Naive thymus-derived CD4-positive, alpha-beta T cell (primary cell): ENCODE measurements at regions of chr22 and their contacts with region 1.

Region 1: DNA sequence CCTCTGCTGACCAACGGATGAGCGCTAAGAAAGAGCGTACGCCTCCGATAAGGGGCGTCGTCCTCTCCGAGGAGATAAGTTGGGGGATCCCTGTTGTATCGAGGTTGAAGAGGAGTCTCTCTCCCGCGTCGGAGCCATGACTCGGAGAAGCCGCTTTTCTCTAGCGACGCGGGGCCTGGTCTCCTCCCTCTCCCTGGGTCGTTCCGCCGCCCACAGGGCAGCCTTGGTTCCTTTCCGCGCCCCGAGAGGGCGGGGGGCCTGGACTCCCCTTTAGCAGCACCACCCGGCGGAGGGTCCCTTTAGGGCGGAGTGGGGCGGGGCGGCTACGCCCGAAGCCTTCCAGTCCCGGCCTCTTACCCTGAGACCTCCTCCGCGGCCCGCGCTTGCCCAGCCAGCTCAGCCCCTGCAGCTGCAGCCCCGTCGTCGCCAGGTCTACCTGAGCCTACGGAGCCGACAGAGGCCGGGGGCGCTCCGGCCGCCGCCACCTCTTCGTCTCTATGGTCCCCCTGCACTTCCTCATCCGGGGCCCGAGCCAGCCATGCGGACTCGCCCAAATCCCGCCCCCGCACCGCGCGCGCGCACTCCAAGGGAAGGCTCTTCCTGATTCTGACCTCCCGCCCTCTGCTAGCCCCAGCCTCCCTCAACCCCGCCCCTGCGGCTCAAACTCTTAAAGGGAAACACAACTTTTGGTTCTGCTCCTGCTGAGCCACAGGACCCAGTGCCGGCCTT is at the start of gene PRR14L:
- DNase-seq: peak; percentile 94 to 100 (median 98)
- ATAC-seq: peak; percentile 86
- H3K4me3 ChIP-seq: peak within 1 kb of the TSS; percentile 92
- H3K4me3 Mint-ChIP-seq: peak within 1 kb of the TSS; percentile 87 to 97 (median 94)
- H3K27ac ChIP-seq: peak within 1 kb of the TSS; percentile 83
- H3K27ac Mint-ChIP-seq: peak within 1 kb of the TSS; percentile 82 to 98 (median 96)
- H3K4me1 ChIP-seq: peaks cover 31 to 37% of the 10 kb centered on the region in 2 donors
- H3K4me1 Mint-ChIP-seq: peaks cover 36 to 65% (median 59%) of the 10 kb centered on the region in 7 donors
- H3K27me3 ChIP-seq: no peaks in the 10 kb centered on the region
- H3K27me3 Mint-ChIP-seq: peaks cover 0 to 2% (median 0%) of the 10 kb centered on the region in 5 donors
- total RNA-seq, gene PRR14L: 43.1 to 82.6 (median 66.9) TPM

Region 2: DNA sequence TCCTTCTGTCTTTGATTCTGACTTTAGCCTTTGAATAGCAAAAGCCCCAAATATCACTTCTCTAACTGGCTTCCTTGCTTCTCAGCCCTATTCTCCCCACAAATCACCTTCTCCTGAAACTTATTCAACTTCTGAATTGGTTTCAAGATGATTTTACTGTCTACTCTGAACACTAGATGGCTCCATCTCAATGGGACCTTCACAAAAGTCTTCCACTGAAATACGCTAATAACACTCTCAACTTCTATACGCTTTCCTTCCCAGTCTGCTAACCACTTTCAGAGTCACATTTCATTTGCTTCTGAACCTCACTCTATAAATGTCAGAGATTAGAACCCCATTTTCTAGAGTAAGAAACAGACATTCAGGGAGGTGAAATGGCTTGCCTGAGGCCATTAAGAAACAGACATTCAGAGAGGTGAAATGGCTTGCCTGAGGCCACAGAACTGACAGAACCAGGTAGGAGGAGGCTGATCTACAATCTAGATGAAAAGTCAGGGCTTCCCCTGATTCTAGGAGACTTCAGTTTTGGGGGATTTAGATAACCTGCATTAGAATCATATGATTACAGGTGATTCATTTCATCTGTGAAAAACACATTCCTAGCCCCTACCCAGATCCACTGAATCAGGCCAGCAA is 801.9 kb before region 1 on chr22:
- CTCF ChIA-PET with region 1: no interaction called
- POLR2A ChIA-PET with region 1: no interaction called
- intact Hi-C with region 1: loop called in 1 of 2 experiments (anchors 5 kb)
- DNase-seq: peak in 7 of 9 donors; percentile 29 to 67 (median 52)
- ATAC-seq: peak; percentile 72
- H3K4me3 ChIP-seq: no peak overlapping the region
- H3K4me3 Mint-ChIP-seq: no peak overlapping the region
- H3K27ac ChIP-seq: peak overlapping the region; percentile 4
- H3K27ac Mint-ChIP-seq: no peak overlapping the region
- H3K4me1 ChIP-seq: peaks cover 11 to 63% of the 10 kb centered on the region in 2 donors
- H3K4me1 Mint-ChIP-seq: peaks cover 52 to 72% (median 65%) of the 10 kb centered on the region in 7 donors
- H3K27me3 ChIP-seq: no peaks in the 10 kb centered on the region
- H3K27me3 Mint-ChIP-seq: no peaks in the 10 kb centered on the region

Region 3: GRCh38 chr22:31160328-31160978 is 589.3 kb before region 1 on chr22:
- CTCF ChIA-PET with region 1: no interaction called
- POLR2A ChIA-PET with region 1: no interaction called
- intact Hi-C with region 1: loop called in 1 of 2 experiments (anchors 5 kb)
- DNase-seq: peak in 3 of 9 donors; percentile 5 to 26 (median 9)
- ATAC-seq: peak; percentile 47
- H3K4me3 ChIP-seq: peak overlapping the region; percentile 76
- H3K4me3 Mint-ChIP-seq: peak overlapping the region; percentile 87 to 100 (median 99)
- H3K27ac ChIP-seq: peak overlapping the region; percentile 74
- H3K27ac Mint-ChIP-seq: peak overlapping the region; percentile 91 to 100 (median 97)
- H3K4me1 ChIP-seq: peaks cover 12 to 17% of the 10 kb centered on the region in 2 donors
- H3K4me1 Mint-ChIP-seq: peaks cover 25 to 42% (median 35%) of the 10 kb centered on the region in 7 donors
- H3K27me3 ChIP-seq: no peaks in the 10 kb centered on the region
- H3K27me3 Mint-ChIP-seq: peaks cover 0 to 13% (median 0%) of the 10 kb centered on the region in 5 donors

Region 4: GRCh38 chr22:31399211-31400028 is 350.4 kb before region 1 on chr22 and contains the start of gene DRG1:
- CTCF ChIA-PET with region 1: no interaction called
- POLR2A ChIA-PET with region 1: no interaction called
- intact Hi-C with region 1: loop called (anchors 1 to 2 kb)
- DNase-seq: peak; percentile 90 to 98 (median 93)
- ATAC-seq: peak; percentile 99
- H3K4me3 ChIP-seq: peak within 1 kb of the TSS; percentile 88
- H3K4me3 Mint-ChIP-seq: peak within 1 kb of the TSS; percentile 92 to 99 (median 96)
- H3K27ac ChIP-seq: peak within 1 kb of the TSS; percentile 91
- H3K27ac Mint-ChIP-seq: peak within 1 kb of the TSS; percentile 85 to 97 (median 94)
- H3K4me1 ChIP-seq: peaks cover 10 to 15% of the 10 kb centered on the region in 2 donors
- H3K4me1 Mint-ChIP-seq: peaks cover 5 to 35% (median 22%) of the 10 kb centered on the region in 7 donors
- H3K27me3 ChIP-seq: no peaks in the 10 kb centered on the region
- H3K27me3 Mint-ChIP-seq: no peaks in the 10 kb centered on the region
- total RNA-seq, gene DRG1: 53.3 to 109 (median 84.4) TPM

Region 5: GRCh38 chr22:31676700-31677099 is 73.1 kb before region 1 on chr22:
- CTCF ChIA-PET with region 1: no interaction called
- POLR2A ChIA-PET with region 1: interaction called, 7 read pairs
- intact Hi-C with region 1: loop called (anchors 1 to 5 kb)
- DNase-seq: peak; percentile 83 to 90 (median 88)
- ATAC-seq: peak; percentile 100
- H3K4me3 ChIP-seq: peak overlapping the region; percentile 98
- H3K4me3 Mint-ChIP-seq: peak overlapping the region; percentile 85 to 97 (median 94)
- H3K27ac ChIP-seq: peak overlapping the region; percentile 74
- H3K27ac Mint-ChIP-seq: peak overlapping the region; percentile 91 to 100 (median 98)
- H3K4me1 ChIP-seq: no peaks in the 10 kb centered on the region
- H3K4me1 Mint-ChIP-seq: peaks cover 7 to 14% (median 10%) of the 10 kb centered on the region in 7 donors
- H3K27me3 ChIP-seq: no peaks in the 10 kb centered on the region
- H3K27me3 Mint-ChIP-seq: no peaks in the 10 kb centered on the region

Region 6: DNA sequence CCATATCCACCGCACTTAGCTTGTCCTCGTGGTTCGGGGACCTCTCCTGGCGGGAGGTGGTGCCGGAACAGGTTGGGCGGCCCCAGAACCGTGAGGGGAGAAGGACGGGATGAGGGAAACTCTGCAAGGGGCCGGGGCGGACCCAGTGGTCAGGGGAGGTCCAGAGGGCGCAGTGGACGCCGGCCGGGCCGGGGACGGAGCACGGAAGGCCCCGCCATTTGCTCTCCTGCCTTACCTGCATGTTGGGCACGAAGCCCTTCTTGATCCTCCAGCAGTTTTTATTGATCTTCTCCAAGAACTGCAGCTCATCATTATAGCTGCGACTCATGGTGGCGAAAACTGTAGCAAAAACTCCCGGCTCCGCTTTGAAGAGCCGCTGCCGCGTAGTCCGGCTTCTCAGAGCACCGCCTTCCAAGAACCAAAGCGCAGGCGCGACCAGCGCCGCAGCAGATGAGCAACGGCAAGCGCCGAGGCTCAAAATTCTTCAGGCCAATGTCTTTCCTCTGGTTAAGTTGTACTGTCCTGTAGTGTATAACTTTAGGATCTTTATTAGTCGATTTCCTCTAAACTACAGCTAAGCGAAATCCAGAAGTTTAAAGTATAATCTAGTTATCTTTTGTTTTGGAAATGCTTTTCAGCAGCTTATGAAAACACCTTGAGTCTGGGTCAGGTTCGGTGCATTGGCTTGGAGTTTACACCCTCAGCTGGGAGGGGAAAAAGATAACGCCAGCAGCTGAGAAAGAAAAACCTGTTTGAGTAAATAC is 662.2 kb after region 1 on chr22 and contains the start of gene RTCB:
- CTCF ChIA-PET with region 1: no interaction called
- POLR2A ChIA-PET with region 1: no interaction called
- intact Hi-C with region 1: loop called in 1 of 2 experiments (anchors 5 kb)
- DNase-seq: peak; percentile 86 to 93 (median 90)
- ATAC-seq: peak; percentile 94
- H3K4me3 ChIP-seq: peak within 1 kb of the TSS; percentile 89
- H3K4me3 Mint-ChIP-seq: peak within 1 kb of the TSS; percentile 96 to 99 (median 98)
- H3K27ac ChIP-seq: peak within 1 kb of the TSS; percentile 92
- H3K27ac Mint-ChIP-seq: peak within 1 kb of the TSS; percentile 90 to 98 (median 96)
- H3K4me1 ChIP-seq: peaks cover 12 to 14% of the 10 kb centered on the region in 2 donors
- H3K4me1 Mint-ChIP-seq: peaks cover 22 to 62% (median 58%) of the 10 kb centered on the region in 7 donors
- H3K27me3 ChIP-seq: no peaks in the 10 kb centered on the region
- H3K27me3 Mint-ChIP-seq: peaks cover 0 to 11% (median 0%) of the 10 kb centered on the region in 5 donors
- total RNA-seq, gene RTCB: 41.6 to 59.7 (median 54.6) TPM